ENCODE measurements at regions of chr6 and their contacts with region 1.

Region 1: DNA sequence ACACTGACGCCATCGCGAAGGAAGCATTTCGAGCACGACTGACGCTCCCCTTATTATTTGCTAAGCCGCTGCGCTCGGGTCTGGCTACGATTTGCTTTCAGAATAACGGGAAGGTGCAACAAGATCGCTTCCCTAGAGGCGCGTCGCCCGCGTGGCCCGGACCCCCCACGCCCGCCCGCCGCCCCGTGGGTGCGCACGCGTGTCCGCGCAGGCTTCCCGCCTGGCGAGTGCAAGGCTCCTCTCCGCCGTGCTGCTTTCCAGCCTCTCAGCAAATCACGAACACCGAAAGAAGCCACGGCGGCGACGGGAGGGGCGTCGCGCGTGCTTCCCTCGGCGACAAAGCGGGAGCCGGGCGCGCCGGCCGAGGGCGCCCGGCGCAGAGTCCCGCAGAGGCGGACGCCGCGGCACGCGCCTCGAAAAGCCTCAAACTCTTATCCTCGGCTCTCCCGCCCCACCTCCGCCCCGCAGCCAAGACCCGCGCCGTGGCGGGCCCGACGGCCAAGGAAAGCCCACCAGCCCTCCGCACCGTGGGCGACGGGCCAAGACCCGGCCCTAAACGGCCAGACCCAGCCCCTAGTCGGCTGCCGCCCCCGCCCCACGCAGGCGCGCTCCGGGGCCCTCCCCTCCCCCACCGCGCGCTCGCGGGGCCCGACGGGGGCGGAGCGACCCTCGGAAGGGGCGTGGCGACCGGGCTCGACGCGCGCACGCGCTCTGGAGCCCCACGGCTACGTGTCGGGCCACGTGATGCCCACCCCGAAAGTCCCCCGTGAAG is 987 bp upstream of the QKI start:
- DNase-seq: peak; percentile 86 to 93 (median 90)
- H3K4me3 ChIP-seq: peak overlapping the region; percentile 38 to 98 (median 73)
- H3K27ac ChIP-seq: peak overlapping the region; percentile 95 to 100 (median 98)
- H3K4me1 ChIP-seq: peaks cover under 1 to 29% of the 10 kb centered on the region in 2 donors
- H3K27me3 ChIP-seq: no peaks in the 10 kb centered on the region
- CTCF ChIP-seq: no peak
- POLR2A ChIP-seq: peak; percentile 57 to 83

Region 2: GRCh38 chr6:163324411-163325389 is 88.8 kb before region 1 on chr6:
- intact Hi-C with region 1: no loop called
- DNase-seq: peak in 1 of 7 donors; percentile 14
- H3K4me3 ChIP-seq: no peak overlapping the region
- H3K27ac ChIP-seq: no peak overlapping the region
- H3K4me1 ChIP-seq: peaks cover 6 to 20% of the 10 kb centered on the region in 2 donors
- H3K27me3 ChIP-seq: no peaks in the 10 kb centered on the region
- CTCF ChIP-seq: no peak
- POLR2A ChIP-seq: no peak

Region 3: GRCh38 chr6:163338671-163339405 is 74.7 kb before region 1 on chr6:
- intact Hi-C with region 1: no loop called
- DNase-seq: peak in 1 of 7 donors; percentile 16
- H3K4me3 ChIP-seq: no peak overlapping the region
- H3K27ac ChIP-seq: peak overlapping the region in 1 of 5 donors; percentile 32
- H3K4me1 ChIP-seq: peaks cover 3 to 19% of the 10 kb centered on the region in 2 donors
- H3K27me3 ChIP-seq: no peaks in the 10 kb centered on the region
- CTCF ChIP-seq: no peak
- POLR2A ChIP-seq: no peak

Region 4: GRCh38 chr6:163364641-163365040 is 48.9 kb before region 1 on chr6:
- intact Hi-C with region 1: loop called (anchors 5 to 10 kb)
- DNase-seq: no peak
- H3K4me3 ChIP-seq: no peak overlapping the region
- H3K27ac ChIP-seq: no peak overlapping the region
- H3K4me1 ChIP-seq: no peaks in the 10 kb centered on the region
- H3K27me3 ChIP-seq: no peaks in the 10 kb centered on the region
- CTCF ChIP-seq: no peak
- POLR2A ChIP-seq: no peak

Region 5: GRCh38 chr6:163579880-163580295 is 166.4 kb after region 1 on chr6:
- intact Hi-C with region 1: no loop called
- DNase-seq: no peak
- H3K4me3 ChIP-seq: no peak overlapping the region
- H3K27ac ChIP-seq: no peak overlapping the region
- H3K4me1 ChIP-seq: no peaks in the 10 kb centered on the region
- H3K27me3 ChIP-seq: no peaks in the 10 kb centered on the region
- CTCF ChIP-seq: no peak
- POLR2A ChIP-seq: no peak

Measured in adrenal gland (tissue), 19 donors.